CD8-positive, alpha-beta T cell (primary cell): ENCODE measurements at regions of chr18 and their contacts with region 1.

Region 1: DNA sequence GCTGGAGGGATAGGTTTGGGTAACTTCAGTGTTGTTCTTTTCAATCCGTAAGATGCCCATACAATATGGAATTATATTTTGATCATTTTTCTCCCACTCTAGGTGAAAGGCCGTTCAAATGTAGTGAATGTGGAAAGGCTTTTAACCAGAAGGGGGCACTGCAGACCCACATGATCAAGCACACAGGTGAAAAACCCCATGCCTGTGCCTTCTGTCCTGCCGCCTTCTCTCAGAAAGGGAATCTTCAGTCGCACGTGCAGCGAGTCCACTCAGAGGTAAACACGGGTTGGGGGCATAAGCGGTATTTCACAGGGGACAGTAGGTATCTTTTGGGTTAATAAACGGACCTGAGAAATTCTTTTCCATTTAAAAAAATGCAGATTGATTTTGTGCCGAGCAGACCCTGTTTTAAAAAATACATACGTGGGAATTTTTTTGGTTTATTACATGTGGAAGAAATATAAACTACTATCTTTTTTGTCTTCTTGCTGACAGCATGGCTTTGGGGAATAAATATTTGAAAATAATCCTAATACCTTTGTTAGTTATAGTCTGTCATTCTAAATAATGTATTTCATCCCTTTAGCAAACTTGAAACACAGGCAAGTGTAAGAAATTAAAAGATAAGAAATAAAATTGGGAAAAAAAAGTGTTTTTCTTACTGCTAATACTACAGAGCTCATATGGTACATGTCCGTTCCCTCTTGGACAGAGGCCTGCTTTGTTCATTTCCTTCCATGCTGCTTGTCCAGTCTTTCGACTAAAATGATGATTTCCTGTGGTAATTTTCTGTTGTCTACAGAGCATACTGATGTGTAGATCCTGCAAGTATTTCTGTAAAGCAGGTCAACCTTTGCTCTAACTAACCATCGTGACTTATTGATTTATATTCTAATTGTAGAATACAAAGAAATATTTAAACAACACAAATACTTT is 53.3 kb downstream of the ZNF236 start:
- DNase-seq: peak in 4 of 9 experiments; percentile 29 to 61 (median 45)
- ATAC-seq: peak; percentile 58
- H3K4me3 ChIP-seq: no peak overlapping the region
- H3K4me3 Mint-ChIP-seq: no peak overlapping the region
- H3K27ac ChIP-seq: no peak overlapping the region
- H3K27ac Mint-ChIP-seq: no peak overlapping the region
- H3K4me1 ChIP-seq: no peaks in the 10 kb centered on the region
- H3K4me1 Mint-ChIP-seq: no peaks in the 10 kb centered on the region
- H3K27me3 ChIP-seq: no peaks in the 10 kb centered on the region
- H3K27me3 Mint-ChIP-seq: no peaks in the 10 kb centered on the region
- CTCF ChIP-seq: peak; percentile 62

Region 2: GRCh38 chr18:76894561-76895346 is 19.1 kb after region 1 on chr18:
- CTCF ChIA-PET with region 1: no interaction called
- POLR2A ChIA-PET with region 1: no interaction called
- intact Hi-C with region 1: no loop called
- DNase-seq: no peak
- ATAC-seq: no peak
- H3K4me3 ChIP-seq: no peak overlapping the region
- H3K4me3 Mint-ChIP-seq: no peak overlapping the region
- H3K27ac ChIP-seq: no peak overlapping the region
- H3K27ac Mint-ChIP-seq: no peak overlapping the region
- H3K4me1 ChIP-seq: no peaks in the 10 kb centered on the region
- H3K4me1 Mint-ChIP-seq: no peaks in the 10 kb centered on the region
- H3K27me3 ChIP-seq: no peaks in the 10 kb centered on the region
- H3K27me3 Mint-ChIP-seq: no peaks in the 10 kb centered on the region
- CTCF ChIP-seq: no peak

Region 3: GRCh38 chr18:77650799-77651385 is 775.2 kb after region 1 on chr18:
- CTCF ChIA-PET with region 1: no interaction called
- POLR2A ChIA-PET with region 1: no interaction called
- intact Hi-C with region 1: loop called in 1 of 2 experiments (anchors 2 kb)
- DNase-seq: peak in 8 of 9 experiments; percentile 14 to 68 (median 44)
- ATAC-seq: peak; percentile 38
- H3K4me3 ChIP-seq: no peak overlapping the region
- H3K4me3 Mint-ChIP-seq: no peak overlapping the region
- H3K27ac ChIP-seq: no peak overlapping the region
- H3K27ac Mint-ChIP-seq: no peak overlapping the region
- H3K4me1 ChIP-seq: peaks cover 5% of the 10 kb centered on the region
- H3K4me1 Mint-ChIP-seq: peaks cover 1% of the 10 kb centered on the region
- H3K27me3 ChIP-seq: peaks cover 0 to 3% of the 10 kb centered on the region in 2 experiments
- H3K27me3 Mint-ChIP-seq: peaks cover 15% of the 10 kb centered on the region
- CTCF ChIP-seq: peak; percentile 54